Ascending aorta (tissue), 2 donors: ENCODE measurements at regions of chr10 and their contacts with region 1.

Region 1: DNA sequence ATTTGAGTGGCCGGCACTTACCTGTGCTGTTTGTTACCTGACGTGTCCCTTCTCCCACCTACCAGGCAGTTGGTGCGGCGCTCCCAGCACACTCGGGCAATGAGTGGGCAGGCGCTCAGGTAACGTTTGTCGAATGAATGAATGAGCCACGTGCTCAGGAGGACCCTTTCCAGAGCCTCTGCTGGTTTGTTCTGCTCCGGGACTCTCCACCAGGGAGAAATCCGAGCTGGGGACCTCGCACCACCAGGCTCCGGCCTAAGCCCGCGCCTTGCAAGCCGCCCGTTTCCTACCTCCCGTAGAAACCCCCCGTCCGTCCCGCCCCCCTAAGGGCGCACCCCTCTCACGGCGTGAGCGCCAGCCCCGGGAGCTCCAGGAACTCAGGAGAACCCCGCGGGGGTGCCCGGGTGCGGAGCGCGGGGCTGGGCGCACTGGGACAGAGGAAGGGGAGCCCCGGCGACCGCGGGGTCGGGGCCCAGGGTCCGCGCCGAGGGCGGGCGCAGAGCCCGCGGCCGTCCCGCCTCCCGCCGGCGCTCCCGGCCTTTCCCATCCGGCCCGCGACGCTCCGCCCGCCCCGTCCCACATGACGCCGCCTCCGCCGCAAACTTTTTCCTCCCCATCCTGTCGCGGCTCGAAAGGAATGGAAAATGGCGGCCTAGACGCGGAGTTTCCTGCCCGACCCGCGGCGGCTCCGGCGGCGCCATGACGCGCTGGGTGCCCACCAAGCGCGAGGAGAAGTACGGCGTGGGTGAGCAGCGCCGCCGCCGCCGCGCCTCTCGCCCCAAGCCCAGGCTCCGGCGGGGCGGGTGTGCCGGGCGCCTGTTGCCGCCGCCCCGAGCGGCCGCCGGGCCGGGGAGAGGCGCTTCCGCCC is at the start of gene DOCK1:
- DNase-seq: peak in 1 of 2 donors; percentile 78
- H3K4me3 ChIP-seq: peak within 1 kb of the TSS; percentile 94 to 99
- H3K27ac ChIP-seq: peak within 1 kb of the TSS; percentile 82 to 87
- H3K4me1 ChIP-seq: peaks cover 0 to 5% of the 10 kb centered on the region in 2 donors
- H3K27me3 ChIP-seq: no peaks in the 10 kb centered on the region
- CTCF ChIP-seq: no peak
- total RNA-seq, gene DOCK1: 25.8 TPM

Region 2: GRCh38 chr10:126921974-126922525 is 17.0 kb after region 1 on chr10:
- intact Hi-C with region 1: loop called (anchors 2 kb)
- DNase-seq: peak in 1 of 2 donors; percentile 82
- H3K4me3 ChIP-seq: no peak overlapping the region
- H3K27ac ChIP-seq: peak overlapping the region; percentile 27 to 34
- H3K4me1 ChIP-seq: peaks cover 0 to 2% of the 10 kb centered on the region in 2 donors
- H3K27me3 ChIP-seq: no peaks in the 10 kb centered on the region
- CTCF ChIP-seq: no peak

Region 3: DNA sequence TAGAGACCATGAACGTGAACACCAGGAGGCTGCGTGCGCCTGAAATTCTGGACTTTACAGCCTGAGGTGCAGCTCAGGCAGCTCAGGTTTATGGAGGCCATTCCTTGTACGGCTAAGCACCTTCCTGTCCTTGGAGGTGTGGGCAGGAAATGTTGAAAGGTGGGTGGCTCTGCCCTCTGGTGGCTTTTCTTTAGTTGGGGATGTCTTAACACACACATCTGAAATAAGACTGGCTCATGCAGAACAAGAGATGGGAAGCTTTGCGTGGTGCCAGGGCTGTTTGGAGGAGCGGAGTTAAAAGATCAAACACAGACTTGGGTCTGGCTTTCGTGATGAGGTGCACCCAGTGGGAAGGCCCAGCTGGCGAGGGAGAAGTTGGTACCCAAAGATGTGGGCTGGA is 64.3 kb after region 1 on chr10:
- intact Hi-C with region 1: loop called (anchors 5 kb)
- DNase-seq: no peak
- H3K4me3 ChIP-seq: no peak overlapping the region
- H3K27ac ChIP-seq: no peak overlapping the region
- H3K4me1 ChIP-seq: peaks cover 0 to 2% of the 10 kb centered on the region in 2 donors
- H3K27me3 ChIP-seq: no peaks in the 10 kb centered on the region
- CTCF ChIP-seq: no peak

Region 4: DNA sequence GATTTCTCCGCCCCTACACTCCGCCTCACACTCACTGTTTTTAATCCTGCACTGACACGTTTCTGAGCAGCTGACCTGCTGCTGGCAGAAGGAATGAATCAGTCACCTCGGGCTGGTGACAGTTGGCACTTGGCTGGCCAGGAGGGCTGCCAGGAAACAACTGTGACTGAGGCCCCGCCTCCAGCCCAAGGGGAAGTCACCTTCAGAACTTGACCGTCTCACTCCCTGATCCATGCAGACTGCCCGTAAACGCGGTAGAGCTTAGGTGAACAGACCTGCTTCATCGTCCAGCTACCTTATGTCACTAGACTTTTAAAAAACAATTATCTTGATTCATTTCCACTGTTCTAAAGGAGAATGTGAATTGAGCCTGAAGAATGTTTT is 107.7 kb after region 1 on chr10:
- intact Hi-C with region 1: loop called (anchors 5 kb)
- DNase-seq: peak; percentile 38 to 76
- H3K4me3 ChIP-seq: peak overlapping the region in 1 of 2 donors; percentile 14
- H3K27ac ChIP-seq: peak overlapping the region; percentile 6 to 20
- H3K4me1 ChIP-seq: peaks cover 0 to 14% of the 10 kb centered on the region in 2 donors
- H3K27me3 ChIP-seq: no peaks in the 10 kb centered on the region
- CTCF ChIP-seq: no peak

Region 5: GRCh38 chr10:127398117-127398970 is 493.3 kb after region 1 on chr10:
- intact Hi-C with region 1: loop called (anchors 10 kb)
- DNase-seq: no peak
- H3K4me3 ChIP-seq: no peak overlapping the region
- H3K27ac ChIP-seq: no peak overlapping the region
- H3K4me1 ChIP-seq: peaks cover 0 to 4% of the 10 kb centered on the region in 2 donors
- H3K27me3 ChIP-seq: no peaks in the 10 kb centered on the region
- CTCF ChIP-seq: no peak